Sigmoid colon (tissue), 7 donors: ENCODE measurements at regions of chr5 and their contacts with region 1.

Region 1: DNA sequence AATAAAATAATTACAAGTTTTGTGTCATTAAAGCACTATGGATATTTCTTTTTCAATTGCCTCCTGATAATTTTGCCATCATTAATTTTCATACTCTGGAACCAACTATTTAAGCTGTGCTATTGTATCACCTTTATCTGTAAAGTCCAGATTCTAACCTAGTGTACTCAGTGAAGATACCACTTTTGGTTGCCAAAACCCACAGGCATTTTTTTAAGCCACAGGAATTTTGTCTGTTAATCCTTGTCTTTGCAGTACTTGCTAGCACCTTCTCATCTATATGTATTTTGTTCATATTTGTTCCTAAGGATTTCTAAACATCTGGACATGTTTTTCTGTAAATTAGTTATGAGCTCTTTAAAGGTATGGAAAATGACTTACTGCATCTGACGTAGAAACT is 481.4 kb upstream of the DAB2 start:
- DNase-seq: no peak
- H3K4me3 ChIP-seq: no peak overlapping the region
- H3K27ac ChIP-seq: no peak overlapping the region
- H3K4me1 ChIP-seq: peaks cover 0 to 15% (median 10%) of the 10 kb centered on the region in 4 donors
- H3K27me3 ChIP-seq: no peaks in the 10 kb centered on the region
- CTCF ChIP-seq: no peak
- EP300 ChIP-seq: no peak
- POLR2A ChIP-seq: no peak

Region 2: DNA sequence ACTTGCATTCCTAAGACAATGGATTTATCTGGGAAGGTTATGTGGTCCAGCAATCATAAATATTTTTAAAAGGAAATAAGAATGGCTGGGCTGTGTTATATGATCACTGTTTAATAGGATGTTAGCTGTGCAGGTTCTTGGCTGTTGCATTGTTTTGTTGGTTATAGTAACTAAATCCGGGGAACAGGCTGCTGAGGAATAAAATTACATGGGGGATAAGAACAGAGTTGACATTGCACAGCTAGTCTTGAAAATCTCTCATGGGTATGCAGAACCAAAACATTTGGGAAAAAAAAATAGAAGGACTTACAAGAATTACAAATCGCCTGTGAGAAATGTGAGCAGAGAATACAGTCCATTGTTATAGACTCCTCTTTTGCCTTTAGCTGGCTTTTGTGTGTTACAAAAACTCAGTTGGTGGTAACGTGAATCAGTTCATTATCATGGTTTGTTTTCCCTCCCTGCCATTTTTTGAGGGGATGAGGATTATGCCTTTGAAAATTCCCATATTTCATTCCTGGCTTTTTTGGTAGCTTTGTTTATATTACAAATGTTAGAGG is 106.0 kb before region 1 on chr5:
- intact Hi-C with region 1: loop called (anchors 10 kb)
- DNase-seq: no peak
- H3K4me3 ChIP-seq: no peak overlapping the region
- H3K27ac ChIP-seq: peak overlapping the region in 2 of 4 donors; percentile 50 to 61
- H3K4me1 ChIP-seq: peaks cover 0 to 24% (median 14%) of the 10 kb centered on the region in 4 donors
- H3K27me3 ChIP-seq: no peaks in the 10 kb centered on the region
- CTCF ChIP-seq: no peak
- EP300 ChIP-seq: no peak
- POLR2A ChIP-seq: no peak